Naive thymus-derived CD4-positive, alpha-beta T cell (primary cell): ENCODE measurements at regions of chr12 and their contacts with region 1.

Region 1: DNA sequence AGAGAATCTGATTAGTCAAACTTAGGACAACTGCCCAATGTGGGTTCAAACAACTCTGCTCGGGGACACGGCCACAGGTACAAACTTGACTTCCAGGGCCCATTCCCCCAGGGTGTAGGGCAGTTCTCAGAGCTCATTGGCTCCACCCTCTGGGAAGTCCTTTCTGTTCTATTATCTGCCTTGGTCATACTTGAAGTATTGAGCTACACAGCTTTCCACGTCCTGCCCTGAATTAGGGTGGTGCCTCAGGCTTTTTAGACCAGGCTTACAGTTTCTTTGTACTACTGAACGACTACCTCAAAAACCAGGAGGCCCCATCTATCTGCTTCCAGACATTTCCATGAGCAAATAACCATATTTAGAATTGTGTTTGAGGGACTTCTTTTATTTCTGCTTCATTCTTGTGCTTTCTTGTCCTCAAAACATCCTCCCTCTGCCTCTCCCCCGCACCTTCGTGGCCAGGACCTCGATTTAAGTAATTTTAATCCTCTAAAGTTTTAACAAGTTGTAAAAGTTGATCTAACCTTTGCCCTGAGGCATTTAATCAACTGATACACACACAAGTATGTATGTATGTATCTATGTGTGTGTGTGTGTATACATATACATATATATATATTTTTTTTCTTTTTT is 281.7 kb upstream of the AMIGO2 start:
- DNase-seq: peak in 8 of 9 donors; percentile 10 to 50 (median 32)
- ATAC-seq: peak; percentile 68
- H3K4me3 ChIP-seq: peak overlapping the region; percentile 48
- H3K4me3 Mint-ChIP-seq: peak overlapping the region; percentile 78 to 88 (median 84)
- H3K27ac ChIP-seq: peak overlapping the region; percentile 80
- H3K27ac Mint-ChIP-seq: peak overlapping the region in 8 of 9 donors; percentile 96 to 100 (median 98)
- H3K4me1 ChIP-seq: peaks cover 56 to 67% of the 10 kb centered on the region in 2 donors
- H3K4me1 Mint-ChIP-seq: peaks cover 52 to 68% (median 59%) of the 10 kb centered on the region in 7 donors
- H3K27me3 ChIP-seq: no peaks in the 10 kb centered on the region
- H3K27me3 Mint-ChIP-seq: no peaks in the 10 kb centered on the region

Region 2: GRCh38 chr12:46268590-46269558 is 1092.6 kb before region 1 on chr12 and contains the start of gene SLC38A1:
- CTCF ChIA-PET with region 1: no interaction called
- POLR2A ChIA-PET with region 1: interaction called, 3 read pairs
- intact Hi-C with region 1: loop called in 1 of 2 experiments (anchors 5 kb)
- DNase-seq: peak; percentile 73 to 92 (median 88)
- ATAC-seq: peak; percentile 81
- H3K4me3 ChIP-seq: peak within 1 kb of the TSS; percentile 93
- H3K4me3 Mint-ChIP-seq: no peak within 1 kb of the TSS
- H3K27ac ChIP-seq: peak within 1 kb of the TSS; percentile 98
- H3K27ac Mint-ChIP-seq: no peak within 1 kb of the TSS
- H3K4me1 ChIP-seq: peaks cover 35 to 40% of the 10 kb centered on the region in 2 donors
- H3K4me1 Mint-ChIP-seq: peaks cover 9 to 35% (median 31%) of the 10 kb centered on the region in 7 donors
- H3K27me3 ChIP-seq: no peaks in the 10 kb centered on the region
- H3K27me3 Mint-ChIP-seq: no peaks in the 10 kb centered on the region
- total RNA-seq, gene SLC38A1: 172 to 283 (median 249) TPM

Region 3: GRCh38 chr12:46944088-46944487 is 417.4 kb before region 1 on chr12:
- CTCF ChIA-PET with region 1: no interaction called
- POLR2A ChIA-PET with region 1: no interaction called
- intact Hi-C with region 1: no loop called
- DNase-seq: no peak
- ATAC-seq: no peak
- H3K4me3 ChIP-seq: no peak overlapping the region
- H3K4me3 Mint-ChIP-seq: no peak overlapping the region
- H3K27ac ChIP-seq: no peak overlapping the region
- H3K27ac Mint-ChIP-seq: no peak overlapping the region
- H3K4me1 ChIP-seq: no peaks in the 10 kb centered on the region
- H3K4me1 Mint-ChIP-seq: no peaks in the 10 kb centered on the region
- H3K27me3 ChIP-seq: no peaks in the 10 kb centered on the region
- H3K27me3 Mint-ChIP-seq: peaks cover 0 to 3% (median 0%) of the 10 kb centered on the region in 5 donors

Region 4: GRCh38 chr12:47190271-47190750 is 171.2 kb before region 1 on chr12:
- CTCF ChIA-PET with region 1: interaction called, 5 read pairs
- POLR2A ChIA-PET with region 1: interaction called, 4 read pairs
- intact Hi-C with region 1: loop called (anchors 1 to 2 kb)
- DNase-seq: no peak
- ATAC-seq: no peak
- H3K4me3 ChIP-seq: no peak overlapping the region
- H3K4me3 Mint-ChIP-seq: peak overlapping the region; percentile 42 to 87 (median 76)
- H3K27ac ChIP-seq: peak overlapping the region; percentile 61
- H3K27ac Mint-ChIP-seq: peak overlapping the region; percentile 81 to 98 (median 93)
- H3K4me1 ChIP-seq: peaks cover 52 to 77% of the 10 kb centered on the region in 2 donors
- H3K4me1 Mint-ChIP-seq: peaks cover 69 to 98% (median 93%) of the 10 kb centered on the region in 7 donors
- H3K27me3 ChIP-seq: no peaks in the 10 kb centered on the region
- H3K27me3 Mint-ChIP-seq: no peaks in the 10 kb centered on the region

Region 5: GRCh38 chr12:47317175-47317915 is 44.2 kb before region 1 on chr12:
- CTCF ChIA-PET with region 1: no interaction called
- POLR2A ChIA-PET with region 1: interaction called, 3 read pairs
- intact Hi-C with region 1: loop called in 1 of 2 experiments (anchors 2 kb)
- DNase-seq: peak in 2 of 9 donors; percentile 5 to 18
- ATAC-seq: peak; percentile 54
- H3K4me3 ChIP-seq: peak overlapping the region; percentile 20
- H3K4me3 Mint-ChIP-seq: peak overlapping the region in 7 of 10 donors; percentile 25 to 74 (median 43)
- H3K27ac ChIP-seq: no peak overlapping the region
- H3K27ac Mint-ChIP-seq: peak overlapping the region in 5 of 9 donors; percentile 6 to 70 (median 21)
- H3K4me1 ChIP-seq: peaks cover 0 to 26% of the 10 kb centered on the region in 2 donors
- H3K4me1 Mint-ChIP-seq: peaks cover 24 to 57% (median 51%) of the 10 kb centered on the region in 7 donors
- H3K27me3 ChIP-seq: no peaks in the 10 kb centered on the region
- H3K27me3 Mint-ChIP-seq: no peaks in the 10 kb centered on the region

Region 6: GRCh38 chr12:47383942-47384341 is 22.4 kb after region 1 on chr12:
- CTCF ChIA-PET with region 1: interaction called, 3 read pairs
- POLR2A ChIA-PET with region 1: interaction called, 7 read pairs
- intact Hi-C with region 1: loop called (anchors 2 kb)
- DNase-seq: no peak
- ATAC-seq: no peak
- H3K4me3 ChIP-seq: no peak overlapping the region
- H3K4me3 Mint-ChIP-seq: no peak overlapping the region
- H3K27ac ChIP-seq: no peak overlapping the region
- H3K27ac Mint-ChIP-seq: peak overlapping the region in 4 of 9 donors; percentile 37 to 66 (median 50)
- H3K4me1 ChIP-seq: peaks cover 0 to 6% of the 10 kb centered on the region in 2 donors
- H3K4me1 Mint-ChIP-seq: peaks cover 26 to 66% (median 54%) of the 10 kb centered on the region in 7 donors
- H3K27me3 ChIP-seq: no peaks in the 10 kb centered on the region
- H3K27me3 Mint-ChIP-seq: no peaks in the 10 kb centered on the region

Region 7: GRCh38 chr12:47882781-47883546 is 521.5 kb after region 1 on chr12:
- CTCF ChIA-PET with region 1: no interaction called
- POLR2A ChIA-PET with region 1: no interaction called
- intact Hi-C with region 1: no loop called
- DNase-seq: peak in 7 of 9 donors; percentile 30 to 60 (median 55)
- ATAC-seq: peak; percentile 71
- H3K4me3 ChIP-seq: peak overlapping the region; percentile 73
- H3K4me3 Mint-ChIP-seq: peak overlapping the region; percentile 84 to 95 (median 90)
- H3K27ac ChIP-seq: peak overlapping the region; percentile 50
- H3K27ac Mint-ChIP-seq: peak overlapping the region; percentile 72 to 99 (median 95)
- H3K4me1 ChIP-seq: peaks cover 14 to 38% of the 10 kb centered on the region in 2 donors
- H3K4me1 Mint-ChIP-seq: peaks cover 33 to 82% (median 54%) of the 10 kb centered on the region in 7 donors
- H3K27me3 ChIP-seq: no peaks in the 10 kb centered on the region
- H3K27me3 Mint-ChIP-seq: no peaks in the 10 kb centered on the region

Region 8: GRCh38 chr12:48105862-48106680 is 744.6 kb after region 1 on chr12 and contains the start of gene SENP1:
- CTCF ChIA-PET with region 1: no interaction called
- POLR2A ChIA-PET with region 1: no interaction called
- intact Hi-C with region 1: loop called in 1 of 2 experiments (anchors 5 kb)
- DNase-seq: peak; percentile 81 to 93 (median 90)
- ATAC-seq: peak; percentile 88
- H3K4me3 ChIP-seq: peak within 1 kb of the TSS; percentile 89
- H3K4me3 Mint-ChIP-seq: peak within 1 kb of the TSS; percentile 88 to 96 (median 92)
- H3K27ac ChIP-seq: peak within 1 kb of the TSS; percentile 93
- H3K27ac Mint-ChIP-seq: peak within 1 kb of the TSS; percentile 90 to 100 (median 95)
- H3K4me1 ChIP-seq: peaks cover 17 to 25% of the 10 kb centered on the region in 2 donors
- H3K4me1 Mint-ChIP-seq: peaks cover 33 to 65% (median 58%) of the 10 kb centered on the region in 7 donors
- H3K27me3 ChIP-seq: no peaks in the 10 kb centered on the region
- H3K27me3 Mint-ChIP-seq: peaks cover 0 to 8% (median 0%) of the 10 kb centered on the region in 5 donors
- total RNA-seq, gene SENP1: 16.9 to 41.9 (median 31.5) TPM

Region 9: DNA sequence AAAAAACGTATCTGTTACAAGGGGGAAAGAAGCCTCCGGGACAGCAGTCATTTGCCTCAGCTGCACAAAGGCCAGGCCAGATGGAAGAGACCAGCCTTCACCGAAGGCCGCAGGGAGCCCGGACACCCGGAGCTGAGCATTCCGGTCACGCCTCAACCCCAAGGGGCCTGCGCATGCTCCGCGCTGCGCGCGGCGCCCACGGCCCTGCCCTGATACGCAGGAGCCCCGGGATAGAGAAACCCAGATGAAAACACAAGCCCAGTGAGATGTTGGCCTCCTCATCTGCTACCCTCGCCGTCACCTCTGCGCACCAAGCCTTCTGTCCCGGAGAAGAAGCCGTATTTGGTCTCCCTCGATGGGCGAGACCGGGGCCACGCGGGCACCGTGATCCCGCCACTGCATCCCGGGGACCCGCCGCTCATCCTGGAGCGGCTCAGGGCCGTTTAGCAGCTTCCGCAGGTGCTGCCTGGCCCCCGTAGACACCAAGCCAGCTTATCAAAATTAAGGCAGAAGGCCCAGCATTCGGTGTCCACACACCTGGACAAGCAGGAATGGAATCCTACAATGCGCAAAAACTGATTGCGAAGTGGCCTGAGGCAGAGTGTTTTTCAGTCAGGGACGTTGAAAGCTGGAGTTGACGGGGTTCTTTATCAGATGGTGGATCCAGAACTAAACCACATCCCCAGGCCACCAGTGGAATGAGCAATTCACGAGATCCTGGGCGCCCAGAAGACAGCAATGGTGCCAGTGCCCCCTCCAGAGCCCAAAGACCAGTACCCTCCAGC is 1166.6 kb after region 1 on chr12:
- CTCF ChIA-PET with region 1: no interaction called
- POLR2A ChIA-PET with region 1: no interaction called
- intact Hi-C with region 1: no loop called
- DNase-seq: no peak
- ATAC-seq: no peak
- H3K4me3 ChIP-seq: no peak overlapping the region
- H3K4me3 Mint-ChIP-seq: no peak overlapping the region
- H3K27ac ChIP-seq: no peak overlapping the region
- H3K27ac Mint-ChIP-seq: no peak overlapping the region
- H3K4me1 ChIP-seq: peaks cover 0 to 8% of the 10 kb centered on the region in 2 donors
- H3K4me1 Mint-ChIP-seq: peaks cover 4 to 30% (median 19%) of the 10 kb centered on the region in 7 donors
- H3K27me3 ChIP-seq: no peaks in the 10 kb centered on the region
- H3K27me3 Mint-ChIP-seq: peaks cover 0 to 3% (median 0%) of the 10 kb centered on the region in 5 donors